H1 (cell line): ENCODE measurements at regions of chr12 and their contacts with region 1.

Region 1: GRCh38 chr12:109069307-109070231 is 17.2 kb downstream of the USP30 start:
- DNase-seq: peak in 1 of 2 experiments; percentile 77
- H3K4me3 ChIP-seq: peak overlapping the region in 3 of 4 experiments; percentile 15 to 46 (median 17); a peak in 5 of 8 replicates
- H3K27ac ChIP-seq: peak overlapping the region; percentile 38
- H3K4me1 ChIP-seq: peaks cover 0 to 11% (median 4%) of the 10 kb centered on the region in 4 experiments; a peak in 3 of 7 replicates
- H3K27me3 ChIP-seq: no peaks in the 10 kb centered on the region
- CTCF ChIP-seq: no peak
- EP300 ChIP-seq: no peak
- POLR2A ChIP-seq: no peak
- RAD21 ChIP-seq: no peak; a peak in 1 of 4 replicates

Region 2: DNA sequence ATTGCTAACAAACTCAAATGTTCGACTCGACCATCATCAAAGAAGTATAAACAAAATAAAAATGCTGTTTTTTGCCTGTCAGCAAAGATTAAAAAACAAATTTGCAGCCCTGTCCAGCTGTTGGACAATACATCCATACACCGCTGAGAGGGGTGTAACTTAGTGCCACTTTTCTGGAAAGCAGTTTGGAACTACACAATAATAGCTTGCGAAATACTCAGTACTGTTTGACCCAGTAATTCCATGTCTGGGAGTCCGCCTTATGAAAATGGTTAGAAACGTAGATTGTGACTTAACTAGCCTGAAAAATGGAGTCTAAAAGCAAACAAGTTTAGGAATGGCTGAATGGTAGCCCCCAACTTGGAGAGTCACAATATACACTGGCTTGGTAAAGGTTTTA is 10.8 kb before region 1 on chr12:
- CTCF ChIA-PET with region 1: interaction called, 10 read pairs
- POLR2A ChIA-PET with region 1: no interaction called
- DNase-seq: no peak
- H3K4me3 ChIP-seq: no peak overlapping the region
- H3K27ac ChIP-seq: no peak overlapping the region
- H3K4me1 ChIP-seq: no peaks in the 10 kb centered on the region
- H3K27me3 ChIP-seq: no peaks in the 10 kb centered on the region
- CTCF ChIP-seq: no peak
- EP300 ChIP-seq: no peak
- POLR2A ChIP-seq: no peak
- RAD21 ChIP-seq: no peak

Region 3: GRCh38 chr12:109093022-109093918 is 23.7 kb after region 1 on chr12 and contains the start of gene ALKBH2:
- CTCF ChIA-PET with region 1: interaction called, 11 read pairs
- POLR2A ChIA-PET with region 1: interaction called, 8 read pairs
- DNase-seq: peak; percentile 70 to 94
- H3K4me3 ChIP-seq: peak within 1 kb of the TSS; percentile 1 to 57 (median 16); a peak in 6 of 8 replicates
- H3K27ac ChIP-seq: no peak within 1 kb of the TSS
- H3K4me1 ChIP-seq: peaks cover 0 to 7% (median 2%) of the 10 kb centered on the region in 4 experiments; a peak in 3 of 7 replicates
- H3K27me3 ChIP-seq: peaks cover 0 to 8% (median 5%) of the 10 kb centered on the region in 4 experiments; a peak in 5 of 7 replicates
- CTCF ChIP-seq: peak; percentile 93 to 99 (median 96)
- EP300 ChIP-seq: peak in 1 of 2 experiments; percentile 64; a peak in 1 of 3 replicates
- POLR2A ChIP-seq: peak; percentile 61 to 94
- RAD21 ChIP-seq: peak; percentile 96 to 97
- total RNA-seq, gene ALKBH2: 22.5 and 25.9 TPM in 2 replicates

Region 4: GRCh38 chr12:109170324-109170723 is 100.8 kb after region 1 on chr12:
- CTCF ChIA-PET with region 1: no interaction called
- POLR2A ChIA-PET with region 1: no interaction called
- DNase-seq: no peak
- H3K4me3 ChIP-seq: no peak overlapping the region
- H3K27ac ChIP-seq: no peak overlapping the region
- H3K4me1 ChIP-seq: no peaks in the 10 kb centered on the region
- H3K27me3 ChIP-seq: no peaks in the 10 kb centered on the region
- CTCF ChIP-seq: no peak
- EP300 ChIP-seq: no peak
- POLR2A ChIP-seq: no peak
- RAD21 ChIP-seq: no peak